BJ (cell line): ENCODE measurements at regions of chr17 and their contacts with region 1.

Region 1: DNA sequence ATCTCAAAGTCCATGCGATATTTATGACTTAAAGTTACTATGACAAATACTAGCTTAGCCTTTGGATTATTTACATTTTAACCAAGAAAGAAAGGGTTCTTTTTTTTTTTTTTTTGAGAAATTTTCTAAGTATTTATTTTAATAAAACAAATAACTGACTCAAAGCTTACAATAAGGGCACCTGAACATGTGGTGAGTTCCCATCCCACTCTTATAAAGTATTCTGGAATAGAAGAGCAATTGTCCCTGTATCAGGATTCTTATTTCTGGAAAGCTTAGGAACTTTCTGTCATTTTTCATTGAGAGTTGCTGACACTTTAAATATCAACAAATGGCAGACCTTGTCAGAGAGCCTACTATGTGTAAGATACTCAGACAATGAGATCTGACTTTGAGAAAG is 686.1 kb upstream of the SOX9 start:
- DNase-seq: no peak
- H3K4me3 ChIP-seq: no peak overlapping the region
- H3K27me3 ChIP-seq: no peaks in the 10 kb centered on the region
- CTCF ChIP-seq: no peak

Region 2: GRCh38 chr17:71363661-71364060 is 71.1 kb before region 1 on chr17:
- CTCF ChIA-PET with region 1: no interaction called
- POLR2A ChIA-PET with region 1: no interaction called
- DNase-seq: no peak
- H3K4me3 ChIP-seq: no peak overlapping the region
- H3K27me3 ChIP-seq: no peaks in the 10 kb centered on the region
- CTCF ChIP-seq: no peak

Region 3: GRCh38 chr17:71398800-71399219 is 35.9 kb before region 1 on chr17:
- CTCF ChIA-PET with region 1: no interaction called
- POLR2A ChIA-PET with region 1: interaction called, 19 read pairs
- DNase-seq: no peak
- H3K4me3 ChIP-seq: no peak overlapping the region
- H3K27me3 ChIP-seq: no peaks in the 10 kb centered on the region
- CTCF ChIP-seq: no peak

Region 4: DNA sequence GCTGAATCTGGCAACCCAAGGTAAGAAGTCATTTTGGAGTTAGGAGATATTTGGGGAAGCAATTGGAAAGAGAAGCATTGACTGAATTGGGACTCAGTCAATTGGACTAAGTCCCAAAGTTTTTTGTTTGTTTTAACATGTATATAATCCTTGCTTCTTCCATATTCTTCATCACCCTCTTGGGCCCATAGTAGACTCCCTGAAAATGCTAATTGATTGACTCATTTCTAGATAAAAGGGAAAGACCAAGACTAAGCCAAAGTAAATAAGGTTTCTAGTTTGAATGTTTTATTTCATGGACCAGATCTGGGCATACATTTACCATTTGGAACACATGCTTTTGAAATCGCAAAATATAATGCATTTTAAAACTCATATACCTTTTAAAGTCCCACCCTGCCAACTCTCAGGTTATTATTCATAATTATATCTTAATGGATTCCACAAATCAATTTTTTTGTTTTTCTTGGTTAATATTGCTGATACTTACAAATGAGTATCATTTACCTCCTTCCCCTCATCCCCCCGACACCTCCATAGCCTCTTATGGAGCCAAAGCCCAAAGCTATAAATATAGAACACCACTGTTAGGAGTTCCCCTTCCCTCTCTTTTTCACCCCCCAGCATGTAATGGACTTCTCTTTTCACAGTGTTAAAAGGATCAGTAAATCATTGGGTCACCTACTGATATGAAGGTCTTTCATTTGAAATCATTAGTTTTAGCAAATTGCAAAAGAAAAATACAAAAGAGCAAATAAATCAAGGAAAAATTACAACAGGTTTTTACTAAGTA is 12.1 kb after region 1 on chr17:
- CTCF ChIA-PET with region 1: no interaction called
- POLR2A ChIA-PET with region 1: no interaction called
- DNase-seq: no peak
- H3K4me3 ChIP-seq: no peak overlapping the region
- H3K27me3 ChIP-seq: no peaks in the 10 kb centered on the region
- CTCF ChIP-seq: no peak